GM12878 (cell line): ENCODE measurements at regions of chr2 and their contacts with region 1.

Region 1: DNA sequence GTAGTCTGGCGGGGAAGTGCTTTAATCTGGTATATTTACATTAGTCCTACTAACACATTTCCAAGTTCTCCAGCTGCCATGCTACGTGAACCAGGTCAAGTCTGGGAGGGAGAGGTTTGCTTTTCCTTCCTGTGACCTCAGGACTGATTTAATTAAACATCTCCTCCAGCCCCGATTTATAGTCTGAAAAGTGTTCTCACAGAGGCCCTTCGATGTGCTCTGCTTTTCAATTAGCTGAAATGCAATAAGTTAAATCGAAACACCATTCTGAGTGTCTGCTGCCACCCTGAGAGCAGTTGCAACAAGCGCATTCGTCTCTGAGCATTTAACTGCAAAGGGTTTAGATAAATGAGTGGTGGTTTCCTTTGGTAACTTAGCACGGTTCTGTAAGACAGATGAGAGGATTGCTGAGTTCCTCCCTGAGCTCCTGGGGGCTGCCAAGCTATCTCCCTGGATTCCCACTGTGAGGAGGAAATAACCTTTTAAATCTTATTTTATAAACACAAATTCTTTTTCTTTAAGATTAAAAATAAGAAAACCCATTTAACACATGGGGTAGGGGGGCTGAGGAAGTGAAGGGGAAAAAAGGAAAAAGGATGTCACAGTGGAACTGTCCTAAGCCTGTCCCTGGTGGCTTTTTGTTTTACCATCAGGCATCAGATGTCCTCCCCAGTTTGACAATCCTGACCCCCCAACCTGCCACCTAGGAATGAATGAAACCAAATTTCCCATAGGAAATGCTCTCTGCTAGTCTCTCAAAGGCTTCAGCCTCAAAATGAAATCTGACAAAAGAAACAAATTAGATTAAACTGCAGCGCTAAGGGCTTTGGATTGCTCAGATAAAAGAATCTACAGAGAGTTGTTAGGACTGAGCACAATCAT is 56.5 kb upstream of the CREB1 start:
- DNase-seq: peak; percentile 30
- ATAC-seq: peak; percentile 84
- H3K4me3 ChIP-seq: no peak overlapping the region
- H3K27ac ChIP-seq: no peak overlapping the region
- H3K4me1 ChIP-seq: no peaks in the 10 kb centered on the region
- H3K27me3 ChIP-seq: no peaks in the 10 kb centered on the region
- CTCF ChIP-seq: peak; percentile 49 to 84 (median 67); a peak in 5 of 6 replicates
- EP300 ChIP-seq: no peak
- POLR2A ChIP-seq: no peak
- RAD21 ChIP-seq: peak; percentile 98

Region 2: DNA sequence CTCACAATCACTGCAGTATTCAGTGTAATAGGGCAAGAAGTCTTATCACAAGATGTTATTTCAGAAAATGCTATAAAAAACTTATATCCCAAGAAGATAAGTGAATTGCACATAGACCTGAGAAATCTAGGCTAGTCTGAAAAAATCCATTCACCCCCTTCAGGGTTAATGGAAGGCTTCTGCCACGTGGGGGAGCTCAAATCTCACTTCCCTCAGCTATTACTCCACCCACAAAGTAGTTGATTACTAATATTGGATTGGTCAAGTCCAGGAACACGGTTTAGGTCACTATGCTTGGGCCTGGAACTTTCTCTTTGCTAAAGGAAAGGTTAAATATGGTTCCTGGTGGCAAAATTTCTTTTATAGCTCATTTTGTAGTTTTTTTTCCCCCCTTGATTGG is 1081.2 kb before region 1 on chr2:
- CTCF ChIA-PET with region 1: no interaction called
- POLR2A ChIA-PET with region 1: no interaction called
- RAD21 ChIA-PET with region 1: no interaction called
- SMC1A ChIA-PET with region 1: no interaction called
- in situ Hi-C with region 1: no loop called
- intact Hi-C with region 1: loop called (anchors 10 kb)
- DNase-seq: no peak
- ATAC-seq: peak; percentile 99
- H3K4me3 ChIP-seq: no peak overlapping the region
- H3K27ac ChIP-seq: no peak overlapping the region
- H3K4me1 ChIP-seq: no peaks in the 10 kb centered on the region
- H3K27me3 ChIP-seq: no peaks in the 10 kb centered on the region
- CTCF ChIP-seq: peak; percentile 57 to 75 (median 71)
- EP300 ChIP-seq: no peak
- POLR2A ChIP-seq: no peak
- RAD21 ChIP-seq: peak; percentile 96

Region 3: DNA sequence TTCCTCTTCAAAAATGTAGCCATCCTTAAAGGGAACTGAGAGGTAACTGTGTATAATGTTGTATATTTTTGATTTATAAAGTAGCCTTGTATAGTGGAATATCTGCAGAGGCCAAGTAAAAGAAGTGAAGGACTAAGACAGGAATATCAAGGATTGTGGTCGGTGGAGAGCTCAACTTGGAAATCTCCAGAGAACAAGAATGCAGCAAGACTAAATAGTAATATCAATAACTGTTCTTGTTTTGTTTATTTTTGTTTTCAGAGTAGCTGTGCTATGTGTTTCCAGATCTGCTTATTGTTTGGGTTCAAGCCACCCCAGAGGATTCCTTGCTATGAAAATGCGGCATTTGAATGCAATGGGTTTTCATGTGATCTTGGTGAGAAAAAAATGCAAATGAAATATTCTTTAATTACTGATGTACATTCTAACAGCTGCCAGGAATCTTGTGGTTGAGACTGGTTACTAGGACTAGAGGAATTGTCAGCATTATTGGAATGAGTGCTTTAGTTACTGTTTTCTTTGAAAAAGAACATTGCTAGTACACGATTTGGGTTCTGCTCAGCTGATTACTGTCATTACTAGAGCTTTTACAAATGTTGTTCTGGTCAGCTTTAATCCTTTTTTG is 682.9 kb before region 1 on chr2:
- CTCF ChIA-PET with region 1: interaction called, 7 read pairs
- POLR2A ChIA-PET with region 1: no interaction called
- RAD21 ChIA-PET with region 1: interaction called, 3 read pairs
- SMC1A ChIA-PET with region 1: interaction called, 10 read pairs
- in situ Hi-C with region 1: loop called (anchors 5 kb)
- intact Hi-C with region 1: no loop called
- DNase-seq: no peak
- ATAC-seq: no peak
- H3K4me3 ChIP-seq: no peak overlapping the region
- H3K27ac ChIP-seq: no peak overlapping the region
- H3K4me1 ChIP-seq: no peaks in the 10 kb centered on the region
- H3K27me3 ChIP-seq: no peaks in the 10 kb centered on the region
- CTCF ChIP-seq: no peak
- EP300 ChIP-seq: no peak
- POLR2A ChIP-seq: no peak
- RAD21 ChIP-seq: no peak

Region 4: DNA sequence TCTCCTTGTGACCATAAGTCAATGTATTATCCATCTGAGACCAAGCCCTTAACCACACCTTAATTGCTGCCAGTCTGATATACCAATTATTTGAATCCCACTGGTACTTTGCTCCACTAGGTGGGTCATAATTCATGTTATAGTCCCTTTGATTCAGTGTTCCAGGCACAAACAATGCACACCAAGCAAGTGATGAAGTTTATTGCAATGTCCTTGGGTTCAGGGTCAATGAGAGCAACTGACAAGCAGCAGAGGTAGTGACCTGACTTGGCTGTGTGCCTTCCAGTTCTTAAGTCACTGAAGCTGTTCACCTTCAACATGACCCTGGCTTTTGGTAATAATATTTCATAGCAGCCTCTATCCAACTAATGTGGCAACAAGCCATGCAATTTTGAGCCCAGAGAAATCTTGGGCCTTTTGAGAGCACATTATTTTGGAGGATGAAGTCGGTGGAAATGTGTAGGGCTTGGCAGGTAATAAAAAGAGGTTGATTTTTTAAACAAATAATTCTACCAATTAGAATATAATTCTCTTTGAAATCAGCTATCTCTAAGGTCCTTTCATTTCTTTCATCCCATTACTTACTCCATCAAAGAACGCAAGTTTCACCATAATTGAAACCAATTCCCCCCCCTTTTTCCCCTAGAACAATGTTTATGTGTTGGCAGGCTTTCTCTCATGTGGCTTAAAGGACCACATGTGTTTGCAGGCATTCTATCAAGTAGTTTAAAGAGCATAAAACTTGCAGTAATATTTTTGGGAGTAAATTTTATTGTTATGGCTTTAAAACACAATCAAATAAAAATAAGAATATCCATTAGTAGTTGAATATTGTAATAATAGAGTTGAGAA is 537.1 kb before region 1 on chr2:
- CTCF ChIA-PET with region 1: no interaction called
- POLR2A ChIA-PET with region 1: no interaction called
- RAD21 ChIA-PET with region 1: no interaction called
- SMC1A ChIA-PET with region 1: no interaction called
- in situ Hi-C with region 1: no loop called
- intact Hi-C with region 1: no loop called
- DNase-seq: no peak
- ATAC-seq: no peak
- H3K4me3 ChIP-seq: no peak overlapping the region
- H3K27ac ChIP-seq: no peak overlapping the region
- H3K4me1 ChIP-seq: no peaks in the 10 kb centered on the region
- H3K27me3 ChIP-seq: no peaks in the 10 kb centered on the region
- CTCF ChIP-seq: no peak
- EP300 ChIP-seq: no peak
- POLR2A ChIP-seq: no peak
- RAD21 ChIP-seq: no peak

Region 5: DNA sequence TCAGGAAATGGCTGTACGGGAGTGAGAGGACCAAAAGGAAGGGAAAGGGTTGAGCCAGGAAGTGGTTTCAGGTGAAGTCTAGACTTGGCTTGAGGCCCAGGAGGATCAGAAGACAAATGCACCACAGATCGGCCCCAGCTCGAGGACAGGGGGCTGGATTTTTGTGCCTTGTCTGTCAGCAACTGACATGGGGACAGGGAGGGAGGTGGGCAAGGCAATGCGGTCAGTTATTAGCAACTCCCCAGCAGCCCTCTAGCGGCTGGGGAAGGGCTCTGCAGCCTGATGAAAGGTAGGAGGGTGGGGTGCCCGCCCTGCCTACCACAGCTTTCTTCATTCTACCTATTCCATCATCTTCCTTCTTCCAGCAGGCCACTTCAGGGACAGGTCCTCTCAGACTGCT is 484.0 kb before region 1 on chr2:
- CTCF ChIA-PET with region 1: interaction called, 21 read pairs
- POLR2A ChIA-PET with region 1: no interaction called
- RAD21 ChIA-PET with region 1: interaction called, 3 read pairs
- SMC1A ChIA-PET with region 1: interaction called, 4 read pairs
- in situ Hi-C with region 1: loop called (anchors 5 kb)
- intact Hi-C with region 1: no loop called
- DNase-seq: no peak
- ATAC-seq: peak; percentile 99
- H3K4me3 ChIP-seq: no peak overlapping the region
- H3K27ac ChIP-seq: no peak overlapping the region
- H3K4me1 ChIP-seq: no peaks in the 10 kb centered on the region
- H3K27me3 ChIP-seq: no peaks in the 10 kb centered on the region
- CTCF ChIP-seq: peak; percentile 72 to 90 (median 86)
- EP300 ChIP-seq: no peak
- POLR2A ChIP-seq: no peak
- RAD21 ChIP-seq: peak; percentile 53

Region 6: DNA sequence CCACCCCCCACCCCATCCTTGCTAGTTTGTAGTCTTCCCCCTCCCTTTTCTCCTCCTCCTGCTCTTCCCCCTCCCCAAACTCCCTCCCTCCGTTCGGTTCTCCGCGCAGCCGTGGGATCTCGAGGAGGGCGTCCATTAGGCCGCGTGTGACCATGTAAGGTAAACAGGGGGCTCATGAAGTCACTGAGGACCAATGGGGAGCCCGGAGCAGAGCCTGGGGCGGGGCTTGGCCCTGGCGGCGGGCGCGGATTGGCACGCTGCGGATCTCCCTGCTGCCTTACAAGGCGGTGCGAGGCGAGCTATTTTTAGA is 307.3 kb before region 1 on chr2:
- CTCF ChIA-PET with region 1: interaction called, 4 read pairs
- POLR2A ChIA-PET with region 1: no interaction called
- RAD21 ChIA-PET with region 1: interaction called, 6 read pairs
- SMC1A ChIA-PET with region 1: interaction called, 3 read pairs
- in situ Hi-C with region 1: no loop called
- intact Hi-C with region 1: loop called (anchors 5 kb)
- DNase-seq: peak; percentile 95
- ATAC-seq: peak; percentile 93
- H3K4me3 ChIP-seq: 0 out of 2 replicates have a peak overlapping the region, but pooled peaks have one; percentile 71
- H3K27ac ChIP-seq: peak overlapping the region; percentile 97
- H3K4me1 ChIP-seq: peaks cover 4% of the 10 kb centered on the region; the same call in 1 of the 2 replicates
- H3K27me3 ChIP-seq: no peaks in the 10 kb centered on the region
- CTCF ChIP-seq: no peak
- EP300 ChIP-seq: no peak
- POLR2A ChIP-seq: no peak
- RAD21 ChIP-seq: no peak

Region 7: GRCh38 chr2:207484444-207485391 is 11.4 kb after region 1 on chr2:
- CTCF ChIA-PET with region 1: no interaction called
- POLR2A ChIA-PET with region 1: no interaction called
- RAD21 ChIA-PET with region 1: interaction called, 3 read pairs
- SMC1A ChIA-PET with region 1: interaction called, 11 read pairs
- in situ Hi-C with region 1: no loop called
- intact Hi-C with region 1: no loop called
- DNase-seq: no peak
- ATAC-seq: peak; percentile 89
- H3K4me3 ChIP-seq: no peak overlapping the region
- H3K27ac ChIP-seq: no peak overlapping the region
- H3K4me1 ChIP-seq: peaks cover 5% of the 10 kb centered on the region
- H3K27me3 ChIP-seq: no peaks in the 10 kb centered on the region
- CTCF ChIP-seq: no peak
- EP300 ChIP-seq: no peak
- POLR2A ChIP-seq: no peak
- RAD21 ChIP-seq: 0 out of 2 replicates have a peak, but pooled peaks have one; percentile 2